ENCODE measurements at regions of chr3 and their contacts with region 1.

Region 1: GRCh38 chr3:134803051-134803505 is 8.0 kb downstream of the EPHB1 start:
- DNase-seq: peak; percentile 64
- ATAC-seq: peak; percentile 68
- H3K4me3 ChIP-seq: no peak overlapping the region
- H3K27ac ChIP-seq: peak overlapping the region; percentile 47
- H3K4me1 ChIP-seq: peaks cover 26% of the 10 kb centered on the region
- H3K27me3 ChIP-seq: no peaks in the 10 kb centered on the region
- CTCF ChIP-seq: no peak
- EP300 ChIP-seq: peak; percentile 60 to 71; a peak in 2 of 4 replicates
- POLR2A ChIP-seq: no peak
- RAD21 ChIP-seq: no peak

Region 2: GRCh38 chr3:134852893-134853351 is 49.8 kb after region 1 on chr3:
- CTCF ChIA-PET with region 1: interaction called, 21 read pairs
- POLR2A ChIA-PET with region 1: interaction called, 8 read pairs
- RAD21 ChIA-PET with region 1: interaction called, 146 read pairs
- SMC1A ChIA-PET with region 1: interaction called, 25 read pairs
- in situ Hi-C with region 1: no loop called
- intact Hi-C with region 1: loop called (anchors 2 kb)
- DNase-seq: peak; percentile 91
- ATAC-seq: peak; percentile 96
- H3K4me3 ChIP-seq: no peak overlapping the region
- H3K27ac ChIP-seq: peak overlapping the region; percentile 68
- H3K4me1 ChIP-seq: peaks cover 36% of the 10 kb centered on the region
- H3K27me3 ChIP-seq: no peaks in the 10 kb centered on the region
- CTCF ChIP-seq: peak in 2 of 3 experiments; percentile 25 to 32; a peak in 2 of 6 replicates
- EP300 ChIP-seq: peak; percentile 56 to 69; a peak in 2 of 4 replicates
- POLR2A ChIP-seq: peak; percentile 56; the same call in 1 of the 2 replicates
- RAD21 ChIP-seq: peak; percentile 39

Region 3: GRCh38 chr3:134956395-134956794 is 153.3 kb after region 1 on chr3:
- CTCF ChIA-PET with region 1: no interaction called
- POLR2A ChIA-PET with region 1: no interaction called
- RAD21 ChIA-PET with region 1: interaction called, 13 read pairs
- SMC1A ChIA-PET with region 1: interaction called, 3 read pairs
- in situ Hi-C with region 1: no loop called
- intact Hi-C with region 1: no loop called
- DNase-seq: peak; percentile 76
- ATAC-seq: peak; percentile 85
- H3K4me3 ChIP-seq: no peak overlapping the region
- H3K27ac ChIP-seq: peak overlapping the region; percentile 73
- H3K4me1 ChIP-seq: peaks cover 27% of the 10 kb centered on the region
- H3K27me3 ChIP-seq: no peaks in the 10 kb centered on the region
- CTCF ChIP-seq: no peak
- EP300 ChIP-seq: no peak
- POLR2A ChIP-seq: no peak
- RAD21 ChIP-seq: no peak

Region 4: GRCh38 chr3:135240426-135240825 is 437.3 kb after region 1 on chr3:
- CTCF ChIA-PET with region 1: interaction called, 10 read pairs
- POLR2A ChIA-PET with region 1: no interaction called
- RAD21 ChIA-PET with region 1: interaction called, 9 read pairs
- SMC1A ChIA-PET with region 1: interaction called, 11 read pairs
- in situ Hi-C with region 1: loop called (anchors 10 kb)
- intact Hi-C with region 1: no loop called
- DNase-seq: no peak
- ATAC-seq: peak; percentile 89
- H3K4me3 ChIP-seq: no peak overlapping the region
- H3K27ac ChIP-seq: no peak overlapping the region
- H3K4me1 ChIP-seq: no peaks in the 10 kb centered on the region
- H3K27me3 ChIP-seq: no peaks in the 10 kb centered on the region
- CTCF ChIP-seq: peak; percentile 25 to 49 (median 34); a peak in 4 of 6 replicates
- EP300 ChIP-seq: no peak
- POLR2A ChIP-seq: no peak
- RAD21 ChIP-seq: peak; percentile 51; the same call in 1 of the 2 replicates

Measured in GM12878 (cell line).